Activated B cell treated with CpG ODN at 0.5 μM for 24 hours (primary cell): ENCODE measurements at regions of chr13 and their contacts with region 1.

Region 1: DNA sequence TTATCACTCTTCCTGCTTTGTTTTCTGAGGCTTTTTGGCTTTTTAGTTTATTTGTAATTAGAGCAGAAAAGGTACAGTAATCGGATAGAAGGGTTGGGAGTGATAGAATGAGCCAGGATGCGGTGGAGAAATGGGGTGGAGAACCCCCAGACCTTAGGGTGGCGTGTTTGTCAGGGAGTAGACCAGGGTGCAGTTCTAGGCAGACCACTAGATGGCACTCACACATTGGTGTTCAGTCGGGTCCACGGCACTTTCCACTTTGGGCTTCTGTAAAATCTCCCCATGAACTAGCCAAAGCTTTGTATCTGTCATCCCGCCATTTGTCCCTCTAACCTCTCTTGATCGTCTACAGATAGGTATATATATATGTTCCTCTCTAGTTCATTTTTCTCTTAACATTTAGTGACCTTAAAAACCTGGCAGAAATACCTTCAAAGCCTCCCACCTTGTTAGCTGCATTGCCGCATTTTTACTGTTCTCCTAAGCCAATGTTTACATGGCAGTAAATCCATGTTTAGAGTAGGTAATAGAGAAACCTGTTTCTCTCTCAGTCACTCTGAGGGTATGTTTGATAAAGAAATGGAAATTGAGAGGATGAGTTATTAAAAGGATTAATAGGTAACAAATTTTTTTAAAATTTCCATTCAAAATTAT is 154.9 kb downstream of the TM9SF2 start:
- DNase-seq: peak; percentile 54
- ATAC-seq: peak; percentile 85
- H3K4me3 Mint-ChIP-seq: peak overlapping the region; percentile 11
- H3K27ac Mint-ChIP-seq: no peak overlapping the region
- H3K4me1 Mint-ChIP-seq: peaks cover 24% of the 10 kb centered on the region
- H3K27me3 Mint-ChIP-seq: peaks cover 3% of the 10 kb centered on the region
- CTCF ChIP-seq: no peak

Region 2: GRCh38 chr13:99528547-99528946 is 127.7 kb before region 1 on chr13:
- CTCF ChIA-PET with region 1: interaction called, 4 read pairs
- POLR2A ChIA-PET with region 1: no interaction called
- intact Hi-C with region 1: loop called (anchors 1 kb)
- DNase-seq: no peak
- ATAC-seq: peak; percentile 79
- H3K4me3 Mint-ChIP-seq: no peak overlapping the region
- H3K27ac Mint-ChIP-seq: no peak overlapping the region
- H3K4me1 Mint-ChIP-seq: peaks cover 16% of the 10 kb centered on the region
- H3K27me3 Mint-ChIP-seq: no peaks in the 10 kb centered on the region
- CTCF ChIP-seq: no peak

Region 3: DNA sequence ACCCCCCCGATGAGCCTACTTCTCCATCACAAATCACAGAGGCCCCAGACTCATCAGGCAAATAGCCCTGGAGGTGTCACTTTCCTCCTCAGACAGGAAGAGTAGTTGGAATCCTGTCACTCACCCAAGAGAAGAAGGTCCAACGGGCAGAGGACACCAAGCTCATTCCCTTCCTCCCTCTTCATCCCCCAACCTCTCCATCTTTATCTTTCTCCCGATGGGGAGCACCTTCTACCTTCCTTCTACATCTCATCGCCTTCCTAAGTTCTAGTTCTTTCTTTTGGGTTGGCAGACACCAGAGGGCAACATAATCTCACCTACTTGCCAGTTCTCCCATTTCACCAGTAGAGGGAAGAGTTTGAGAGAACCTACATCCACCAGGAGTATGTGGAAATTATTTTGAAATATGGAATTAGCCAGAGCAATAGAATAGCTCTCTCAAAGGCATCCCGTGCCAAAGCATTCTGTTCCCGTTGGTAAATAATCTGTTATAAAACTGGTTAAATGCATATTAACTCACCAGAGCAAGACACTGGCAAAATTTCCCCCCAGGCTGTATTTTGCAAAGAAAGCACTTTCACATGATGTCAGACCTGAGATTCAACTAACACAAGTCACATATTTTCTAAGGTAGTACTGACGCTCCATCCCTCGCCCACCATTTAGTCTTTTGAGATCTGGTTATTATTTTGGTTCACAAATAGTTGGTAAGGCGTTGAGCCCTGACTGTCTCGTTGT is 260.3 kb after region 1 on chr13:
- CTCF ChIA-PET with region 1: no interaction called
- POLR2A ChIA-PET with region 1: no interaction called
- intact Hi-C with region 1: loop called (anchors 1 kb)
- DNase-seq: no peak
- ATAC-seq: peak; percentile 56
- H3K4me3 Mint-ChIP-seq: no peak overlapping the region
- H3K27ac Mint-ChIP-seq: no peak overlapping the region
- H3K4me1 Mint-ChIP-seq: peaks cover 1% of the 10 kb centered on the region
- H3K27me3 Mint-ChIP-seq: peaks cover 25% of the 10 kb centered on the region
- CTCF ChIP-seq: peak; percentile 62

Region 4: GRCh38 chr13:100235311-100235901 is 579.2 kb after region 1 on chr13:
- CTCF ChIA-PET with region 1: interaction called, 8 read pairs
- POLR2A ChIA-PET with region 1: no interaction called
- intact Hi-C with region 1: loop called (anchors 1 kb)
- DNase-seq: no peak
- ATAC-seq: peak; percentile 45
- H3K4me3 Mint-ChIP-seq: peak overlapping the region; percentile 3
- H3K27ac Mint-ChIP-seq: no peak overlapping the region
- H3K4me1 Mint-ChIP-seq: peaks cover 7% of the 10 kb centered on the region
- H3K27me3 Mint-ChIP-seq: no peaks in the 10 kb centered on the region
- CTCF ChIP-seq: no peak

Region 5: DNA sequence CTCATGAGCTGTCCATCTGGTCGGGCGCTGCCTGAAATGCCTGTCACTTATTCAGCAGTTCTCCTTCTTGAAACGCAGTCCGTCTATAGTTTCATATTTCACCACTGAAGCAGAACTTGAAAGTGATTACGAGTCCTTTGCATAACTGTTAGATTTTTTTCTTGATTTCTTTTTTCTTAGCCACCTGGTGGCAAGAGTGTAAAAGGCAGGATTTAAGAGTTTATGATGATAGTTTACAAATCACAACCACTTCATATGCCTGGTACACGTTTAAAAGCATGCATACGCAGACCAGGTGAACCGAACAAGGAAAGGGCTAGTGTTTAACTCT is 886.6 kb after region 1 on chr13:
- CTCF ChIA-PET with region 1: no interaction called
- POLR2A ChIA-PET with region 1: no interaction called
- intact Hi-C with region 1: loop called (anchors 1 kb)
- DNase-seq: no peak
- ATAC-seq: peak; percentile 74
- H3K4me3 Mint-ChIP-seq: no peak overlapping the region
- H3K27ac Mint-ChIP-seq: no peak overlapping the region
- H3K4me1 Mint-ChIP-seq: peaks cover 6% of the 10 kb centered on the region
- H3K27me3 Mint-ChIP-seq: no peaks in the 10 kb centered on the region
- CTCF ChIP-seq: peak; percentile 28

Region 6: DNA sequence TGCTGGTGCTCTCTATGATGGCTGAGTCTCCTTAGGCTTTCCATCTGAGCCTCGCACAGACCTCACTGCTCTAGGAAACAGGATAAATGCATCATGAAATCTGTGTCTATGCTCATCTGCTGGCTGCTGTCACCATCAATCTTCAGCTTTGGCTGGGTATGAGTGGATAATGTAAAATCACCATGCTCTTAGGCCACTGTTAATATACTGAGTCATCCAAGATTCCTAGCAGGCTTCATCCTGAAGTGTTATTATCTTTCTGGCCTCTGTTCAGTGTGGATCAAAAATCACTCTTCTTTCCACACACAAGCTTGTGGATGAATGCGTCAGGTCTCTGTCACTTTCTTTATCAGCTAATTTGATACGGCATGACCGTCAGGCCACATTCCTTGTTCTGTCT is 1442.7 kb after region 1 on chr13:
- CTCF ChIA-PET with region 1: no interaction called
- POLR2A ChIA-PET with region 1: no interaction called
- intact Hi-C with region 1: loop called (anchors 1 kb)
- DNase-seq: no peak
- ATAC-seq: no peak
- H3K4me3 Mint-ChIP-seq: no peak overlapping the region
- H3K27ac Mint-ChIP-seq: no peak overlapping the region
- H3K4me1 Mint-ChIP-seq: no peaks in the 10 kb centered on the region
- H3K27me3 Mint-ChIP-seq: no peaks in the 10 kb centered on the region
- CTCF ChIP-seq: no peak